HAP-1 (cell line): ENCODE measurements at regions of chr14 and their contacts with region 1.

Region 1: GRCh38 chr14:20632682-20633428 is 8.6 kb downstream of the OR6S1 start:
- DNase-seq: peak; percentile 75 to 88
- H3K4me3 ChIP-seq: peak overlapping the region; percentile 53
- H3K4me1 ChIP-seq: peaks cover 4% of the 10 kb centered on the region
- H3K27me3 ChIP-seq: peaks cover 8% of the 10 kb centered on the region

Region 2: GRCh38 chr14:20682435-20683124 is 49.7 kb after region 1 on chr14:
- in situ Hi-C with region 1: loop called (anchors 5 kb)
- DNase-seq: peak; percentile 80 to 88
- H3K4me3 ChIP-seq: peak overlapping the region; percentile 59
- H3K4me1 ChIP-seq: peaks cover 6% of the 10 kb centered on the region; the same call in 1 of the 2 replicates
- H3K27me3 ChIP-seq: no peaks in the 10 kb centered on the region